ENCODE measurements at regions of chr6 and their contacts with region 1.

Region 1: DNA sequence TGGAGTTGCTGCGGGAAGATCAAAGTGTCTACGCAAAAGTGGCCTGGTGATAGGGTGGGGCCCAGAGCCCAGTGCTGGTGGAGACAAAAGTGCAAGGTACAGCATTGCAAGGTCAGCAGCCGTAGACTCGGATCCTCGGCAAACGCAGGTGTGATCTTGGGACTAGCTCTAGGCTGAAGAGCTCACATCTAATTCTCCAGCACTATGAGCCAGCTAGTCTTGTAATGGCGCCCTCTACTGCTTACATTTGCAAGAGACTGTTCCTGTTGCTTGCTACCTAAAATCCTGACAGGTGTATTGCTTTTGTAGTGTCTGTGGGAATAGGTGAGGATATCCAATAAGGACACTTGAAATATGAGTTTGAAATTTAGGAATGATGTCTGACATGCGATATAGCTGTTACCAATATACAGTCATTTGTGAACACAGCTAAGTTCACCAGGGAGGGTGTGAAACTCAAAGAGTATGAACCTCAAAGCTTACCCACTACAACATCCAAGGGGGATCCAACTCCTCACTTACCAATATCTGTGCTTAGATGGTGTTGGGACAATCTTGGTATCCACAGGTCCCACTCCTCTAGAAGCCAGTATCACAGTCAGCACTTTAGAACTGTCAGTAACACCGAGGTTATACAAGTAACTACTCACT is 58.4 kb downstream of the PDE7B start:
- DNase-seq: peak; percentile 80
- ATAC-seq: peak; percentile 85
- H3K4me3 ChIP-seq: no peak overlapping the region
- H3K4me3 Mint-ChIP-seq: peak overlapping the region; percentile 21
- H3K27ac ChIP-seq: no peak overlapping the region
- H3K27ac Mint-ChIP-seq: peak overlapping the region; percentile 53
- H3K4me1 ChIP-seq: peaks cover 0 to 3% of the 10 kb centered on the region in 2 donors
- H3K4me1 Mint-ChIP-seq: peaks cover 2% of the 10 kb centered on the region
- H3K27me3 ChIP-seq: no peaks in the 10 kb centered on the region
- H3K27me3 Mint-ChIP-seq: no peaks in the 10 kb centered on the region
- CTCF ChIP-seq: peak; percentile 85

Region 2: DNA sequence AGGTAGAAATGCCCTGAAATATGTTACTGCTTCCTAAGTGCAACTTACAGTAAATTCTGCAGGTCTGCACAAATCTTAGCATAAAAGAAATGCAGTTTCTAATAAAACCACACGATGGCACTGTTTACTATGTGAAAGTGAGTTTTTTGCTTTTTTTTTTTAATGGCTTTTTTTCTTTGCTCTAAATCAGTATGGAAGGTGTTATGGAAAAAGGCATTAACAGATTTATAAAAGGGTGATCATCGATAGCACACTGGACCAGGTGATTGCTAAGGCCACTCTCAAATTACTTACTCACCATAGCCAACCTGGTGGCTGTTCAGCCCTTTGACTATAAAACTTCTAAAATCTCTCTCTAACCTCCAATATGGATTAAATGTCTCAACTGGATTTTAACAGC is 458.2 kb before region 1 on chr6:
- CTCF ChIA-PET with region 1: interaction called, 18 read pairs
- POLR2A ChIA-PET with region 1: no interaction called
- intact Hi-C with region 1: loop called (anchors 2 kb)
- DNase-seq: peak; percentile 67
- ATAC-seq: no peak
- H3K4me3 ChIP-seq: no peak overlapping the region
- H3K4me3 Mint-ChIP-seq: no peak overlapping the region
- H3K27ac ChIP-seq: no peak overlapping the region
- H3K27ac Mint-ChIP-seq: no peak overlapping the region
- H3K4me1 ChIP-seq: peaks cover 3 to 8% of the 10 kb centered on the region in 2 donors
- H3K4me1 Mint-ChIP-seq: peaks cover 9% of the 10 kb centered on the region
- H3K27me3 ChIP-seq: no peaks in the 10 kb centered on the region
- H3K27me3 Mint-ChIP-seq: no peaks in the 10 kb centered on the region
- CTCF ChIP-seq: peak; percentile 86

Region 3: DNA sequence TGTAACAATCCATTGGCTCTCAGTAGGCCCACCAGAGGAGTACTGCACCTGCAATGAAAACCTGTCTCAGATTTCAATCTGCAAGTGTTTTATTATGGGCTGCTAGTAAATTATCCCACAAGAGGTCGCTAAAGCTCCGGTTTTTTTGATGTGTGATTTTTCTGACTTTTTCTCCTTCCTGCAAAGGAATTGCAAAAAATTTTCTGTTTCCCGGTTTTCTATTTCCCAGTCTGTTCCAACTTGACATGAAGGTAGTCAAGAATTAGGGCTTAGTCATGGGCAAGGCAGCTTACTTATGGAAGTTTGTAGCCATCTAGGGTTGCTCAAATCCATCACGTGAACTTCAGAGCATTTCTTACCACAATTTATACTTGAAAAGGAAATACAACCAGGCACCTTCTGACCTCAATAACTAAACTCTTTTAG is 373.9 kb before region 1 on chr6:
- CTCF ChIA-PET with region 1: interaction called, 54 read pairs
- POLR2A ChIA-PET with region 1: no interaction called
- intact Hi-C with region 1: no loop called
- DNase-seq: peak; percentile 42
- ATAC-seq: no peak
- H3K4me3 ChIP-seq: no peak overlapping the region
- H3K4me3 Mint-ChIP-seq: no peak overlapping the region
- H3K27ac ChIP-seq: no peak overlapping the region
- H3K27ac Mint-ChIP-seq: no peak overlapping the region
- H3K4me1 ChIP-seq: no peaks in the 10 kb centered on the region
- H3K4me1 Mint-ChIP-seq: peaks cover 8% of the 10 kb centered on the region
- H3K27me3 ChIP-seq: no peaks in the 10 kb centered on the region
- H3K27me3 Mint-ChIP-seq: peaks cover 10% of the 10 kb centered on the region
- CTCF ChIP-seq: peak; percentile 74

Region 4: GRCh38 chr6:135680964-135681913 is 228.6 kb before region 1 on chr6:
- CTCF ChIA-PET with region 1: interaction called, 173 read pairs
- POLR2A ChIA-PET with region 1: no interaction called
- intact Hi-C with region 1: loop called (anchors 1 kb)
- DNase-seq: no peak
- ATAC-seq: no peak
- H3K4me3 ChIP-seq: no peak overlapping the region
- H3K4me3 Mint-ChIP-seq: no peak overlapping the region
- H3K27ac ChIP-seq: no peak overlapping the region
- H3K27ac Mint-ChIP-seq: no peak overlapping the region
- H3K4me1 ChIP-seq: no peaks in the 10 kb centered on the region
- H3K4me1 Mint-ChIP-seq: no peaks in the 10 kb centered on the region
- H3K27me3 ChIP-seq: no peaks in the 10 kb centered on the region
- H3K27me3 Mint-ChIP-seq: peaks cover 12% of the 10 kb centered on the region
- CTCF ChIP-seq: no peak

Region 5: DNA sequence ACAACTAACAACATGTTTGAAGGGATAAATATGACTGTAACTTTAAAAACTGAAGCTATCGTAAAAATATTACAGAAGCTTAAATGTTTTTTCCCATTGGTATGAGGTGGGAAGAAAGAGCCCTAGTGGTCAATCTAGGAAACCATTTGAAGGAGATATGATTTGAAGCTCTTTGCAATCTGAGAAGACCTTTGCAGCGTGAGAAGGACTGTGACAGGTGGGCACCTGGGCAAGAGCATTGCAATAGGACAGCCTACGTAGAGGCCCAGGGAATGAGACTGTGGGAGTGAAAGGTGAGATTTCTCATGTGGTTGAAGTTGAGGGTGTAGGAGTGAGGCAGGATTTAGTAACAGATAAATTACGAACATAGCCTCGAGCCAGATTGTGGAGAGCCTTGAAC is 166.4 kb before region 1 on chr6:
- CTCF ChIA-PET with region 1: interaction called, 15 read pairs
- POLR2A ChIA-PET with region 1: no interaction called
- intact Hi-C with region 1: no loop called
- DNase-seq: no peak
- ATAC-seq: no peak
- H3K4me3 ChIP-seq: no peak overlapping the region
- H3K4me3 Mint-ChIP-seq: no peak overlapping the region
- H3K27ac ChIP-seq: no peak overlapping the region
- H3K27ac Mint-ChIP-seq: no peak overlapping the region
- H3K4me1 ChIP-seq: no peaks in the 10 kb centered on the region
- H3K4me1 Mint-ChIP-seq: no peaks in the 10 kb centered on the region
- H3K27me3 ChIP-seq: no peaks in the 10 kb centered on the region
- H3K27me3 Mint-ChIP-seq: peaks cover 7% of the 10 kb centered on the region
- CTCF ChIP-seq: no peak

Region 6: GRCh38 chr6:135830452-135830881 is 79.4 kb before region 1 on chr6:
- CTCF ChIA-PET with region 1: interaction called, 6 read pairs
- POLR2A ChIA-PET with region 1: no interaction called
- intact Hi-C with region 1: loop called (anchors 5 kb)
- DNase-seq: no peak
- ATAC-seq: no peak
- H3K4me3 ChIP-seq: no peak overlapping the region
- H3K4me3 Mint-ChIP-seq: no peak overlapping the region
- H3K27ac ChIP-seq: no peak overlapping the region
- H3K27ac Mint-ChIP-seq: no peak overlapping the region
- H3K4me1 ChIP-seq: no peaks in the 10 kb centered on the region
- H3K4me1 Mint-ChIP-seq: no peaks in the 10 kb centered on the region
- H3K27me3 ChIP-seq: peaks cover 0 to 8% (median 4%) of the 10 kb centered on the region in 4 experiments
- H3K27me3 Mint-ChIP-seq: peaks cover 22% of the 10 kb centered on the region
- CTCF ChIP-seq: no peak

Region 7: DNA sequence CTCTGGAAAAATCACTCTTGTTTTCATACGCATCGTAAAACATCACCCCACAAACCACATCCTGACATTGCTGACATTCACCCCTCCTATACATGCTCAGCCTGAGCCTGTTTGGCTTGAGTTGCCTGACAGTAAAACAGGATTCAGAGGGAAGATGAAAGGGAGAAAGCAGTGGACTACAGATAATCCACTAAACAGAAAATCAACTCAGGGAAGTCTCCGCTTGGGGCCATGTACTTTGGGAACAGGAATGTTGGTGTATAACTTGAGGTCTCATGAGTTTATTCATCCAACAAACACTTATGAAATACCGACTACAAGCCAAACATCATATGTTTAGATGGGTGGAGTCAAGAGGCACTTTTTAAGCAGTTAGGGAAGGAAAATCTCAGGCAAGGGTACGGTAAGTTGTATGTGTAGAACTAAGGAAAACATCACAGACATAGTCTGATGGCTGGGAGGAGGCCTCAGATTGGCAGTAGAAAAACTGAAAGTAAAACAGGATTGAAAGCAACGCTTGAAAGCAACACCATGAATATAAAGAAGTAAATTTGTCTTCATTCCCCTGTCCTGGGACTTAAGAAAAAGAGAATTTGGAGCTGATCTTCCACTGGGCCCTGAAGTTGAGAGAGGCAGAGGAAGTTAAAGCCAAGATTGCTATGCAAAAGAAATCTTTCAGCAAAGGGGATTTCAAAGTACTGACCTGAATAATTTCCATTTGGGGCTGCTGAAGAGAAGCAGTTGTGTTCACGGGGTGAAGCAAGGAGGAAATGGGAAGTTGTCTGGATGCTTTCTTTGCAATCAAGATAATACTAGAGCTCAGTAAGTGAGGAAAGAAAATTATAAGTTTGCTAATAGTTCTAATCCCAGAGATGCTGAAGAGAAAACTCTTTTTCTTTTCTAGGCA is 29.5 kb before region 1 on chr6:
- CTCF ChIA-PET with region 1: interaction called, 9 read pairs
- POLR2A ChIA-PET with region 1: no interaction called
- intact Hi-C with region 1: loop called (anchors 1 kb)
- DNase-seq: peak; percentile 75
- ATAC-seq: peak; percentile 90
- H3K4me3 ChIP-seq: peak overlapping the region; percentile 14 to 64 (median 36)
- H3K4me3 Mint-ChIP-seq: peak overlapping the region; percentile 84
- H3K27ac ChIP-seq: peak overlapping the region; percentile 91 to 99
- H3K27ac Mint-ChIP-seq: peak overlapping the region; percentile 98
- H3K4me1 ChIP-seq: peaks cover 35% of the 10 kb centered on the region in 2 donors
- H3K4me1 Mint-ChIP-seq: peaks cover 49% of the 10 kb centered on the region
- H3K27me3 ChIP-seq: no peaks in the 10 kb centered on the region
- H3K27me3 Mint-ChIP-seq: no peaks in the 10 kb centered on the region
- CTCF ChIP-seq: no peak